ENCODE measurements at regions of chr11 and their contacts with region 1.

Region 1: GRCh38 chr11:75022759-75023396 is 34.1 kb downstream of the NEU3 start:
- DNase-seq: peak; percentile 91
- ATAC-seq: peak; percentile 99
- H3K4me3 Mint-ChIP-seq: no peak overlapping the region
- H3K27ac Mint-ChIP-seq: no peak overlapping the region
- H3K4me1 Mint-ChIP-seq: no peaks in the 10 kb centered on the region
- H3K27me3 Mint-ChIP-seq: peaks cover 4% of the 10 kb centered on the region
- CTCF ChIP-seq: peak; percentile 97

Region 2: DNA sequence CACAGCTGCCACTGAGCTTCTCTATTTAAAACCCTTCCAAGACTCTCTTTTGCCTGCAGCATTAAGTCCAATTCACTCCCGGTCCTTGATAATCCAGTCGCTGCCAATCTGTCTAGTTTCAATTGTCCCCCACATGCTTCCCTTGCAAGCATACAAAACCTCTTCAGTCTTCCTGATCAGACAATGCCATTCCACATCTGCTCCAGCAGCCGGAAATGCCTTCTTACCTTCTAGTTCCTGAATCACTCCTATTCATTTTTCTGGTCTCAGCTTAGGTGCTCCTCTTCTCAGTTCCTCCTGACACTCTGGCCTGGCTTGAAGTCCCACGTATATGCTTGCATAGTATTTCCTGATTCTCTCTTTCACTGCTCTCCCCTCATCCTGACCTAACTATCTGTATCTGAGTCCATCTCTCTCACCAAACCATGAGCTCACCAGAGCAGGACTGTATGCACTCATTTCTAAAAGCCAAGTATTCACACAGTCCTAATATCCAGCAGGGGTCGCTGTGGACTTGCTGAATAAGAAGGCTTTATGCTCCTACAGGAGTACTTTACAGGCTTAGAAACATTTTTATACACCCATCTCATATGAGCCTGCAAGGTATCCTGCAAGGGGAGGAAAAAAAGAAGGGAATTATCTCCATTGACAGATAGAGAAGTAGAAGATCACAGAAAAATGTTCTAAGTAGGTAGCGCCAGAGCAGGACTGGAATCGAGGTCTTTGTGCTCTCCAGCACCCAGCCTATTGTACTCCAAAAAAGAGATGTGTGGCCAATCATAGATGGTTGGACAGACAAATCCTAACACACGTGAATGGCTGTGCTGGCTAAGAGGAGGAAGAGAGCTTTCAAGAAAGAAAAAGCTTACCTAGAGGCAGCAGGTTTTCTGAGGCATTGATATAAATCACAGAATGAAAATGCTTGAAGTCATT is 93.2 kb before region 1 on chr11:
- CTCF ChIA-PET with region 1: interaction called, 10 read pairs
- POLR2A ChIA-PET with region 1: no interaction called
- DNase-seq: peak; percentile 53
- ATAC-seq: peak; percentile 95
- H3K4me3 Mint-ChIP-seq: no peak overlapping the region
- H3K27ac Mint-ChIP-seq: no peak overlapping the region
- H3K4me1 Mint-ChIP-seq: no peaks in the 10 kb centered on the region
- H3K27me3 Mint-ChIP-seq: no peaks in the 10 kb centered on the region
- CTCF ChIP-seq: peak; percentile 56; the same call in 1 of the 2 replicates

Region 3: DNA sequence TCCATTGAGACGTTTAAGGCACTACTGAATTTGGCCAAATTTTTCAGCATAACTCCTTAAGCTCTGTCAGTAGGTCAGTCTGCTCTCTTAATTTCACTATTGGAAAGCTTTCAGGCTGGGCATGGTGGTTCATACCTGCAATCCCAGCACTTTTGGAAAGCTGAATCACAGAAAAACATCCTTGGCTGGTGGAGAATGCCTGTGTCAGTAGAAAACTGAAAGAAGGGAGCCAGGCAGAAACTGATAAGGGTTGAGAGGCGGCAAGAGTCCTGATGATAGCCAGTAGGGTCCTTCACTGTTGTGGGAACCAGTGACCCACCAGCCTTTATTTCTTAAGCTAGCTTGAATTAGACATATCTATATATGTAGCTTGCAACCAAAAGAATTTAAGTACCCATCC is 11.5 kb before region 1 on chr11:
- CTCF ChIA-PET with region 1: interaction called, 16 read pairs
- POLR2A ChIA-PET with region 1: no interaction called
- DNase-seq: no peak
- ATAC-seq: no peak
- H3K4me3 Mint-ChIP-seq: no peak overlapping the region
- H3K27ac Mint-ChIP-seq: no peak overlapping the region
- H3K4me1 Mint-ChIP-seq: peaks cover 8% of the 10 kb centered on the region
- H3K27me3 Mint-ChIP-seq: no peaks in the 10 kb centered on the region
- CTCF ChIP-seq: no peak

Region 4: DNA sequence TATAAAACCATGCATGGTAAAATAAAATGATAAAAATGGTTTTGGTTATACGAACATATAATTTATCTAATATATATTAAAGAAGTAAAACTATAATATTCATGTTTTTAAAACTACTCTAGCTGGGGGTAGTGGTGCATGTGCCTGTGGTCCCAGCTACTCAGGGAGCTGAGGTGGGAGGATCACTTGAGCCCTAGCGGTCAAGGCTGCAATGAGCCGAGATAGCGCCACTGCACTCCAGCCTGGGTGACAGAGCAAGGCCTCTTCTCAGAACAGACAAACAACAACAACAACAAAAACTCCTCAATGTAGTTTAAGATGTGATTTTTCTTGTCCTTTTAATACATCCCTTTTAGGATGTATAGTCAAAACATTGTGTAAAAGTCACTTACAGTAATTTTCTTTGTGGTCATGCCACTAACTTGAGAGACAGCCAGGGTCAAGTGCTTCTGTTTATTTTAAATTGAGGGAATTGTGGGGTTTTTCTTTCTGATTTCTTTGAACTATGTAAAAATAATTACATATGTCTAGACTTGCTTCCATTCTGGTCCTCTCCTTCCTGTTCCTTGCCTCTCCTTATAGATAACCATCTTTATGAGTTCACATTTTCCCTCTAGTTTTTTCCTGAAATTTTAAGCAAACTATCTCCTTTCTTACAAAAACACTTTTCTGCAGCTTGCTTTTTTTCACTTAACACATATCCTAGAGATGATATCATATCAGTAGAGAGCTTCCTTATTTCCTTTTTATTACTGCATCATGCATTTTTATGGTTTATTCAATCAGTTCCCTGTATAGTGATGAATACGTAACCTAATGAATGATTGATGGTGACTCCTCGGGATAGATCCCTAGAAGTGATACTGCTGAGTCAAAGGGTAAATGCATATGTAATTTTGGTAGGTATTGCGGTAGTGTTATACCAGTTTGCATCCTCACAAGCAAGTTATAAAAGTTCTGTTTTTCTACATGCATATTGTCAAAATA is 64.7 kb after region 1 on chr11:
- CTCF ChIA-PET with region 1: interaction called, 10 read pairs
- POLR2A ChIA-PET with region 1: no interaction called
- DNase-seq: no peak
- ATAC-seq: peak; percentile 48; the same call in 1 of the 2 replicates
- H3K4me3 Mint-ChIP-seq: no peak overlapping the region
- H3K27ac Mint-ChIP-seq: no peak overlapping the region
- H3K4me1 Mint-ChIP-seq: 0 out of 2 replicates have a peak, but pooled peaks cover under 1% of the 10 kb centered on the region
- H3K27me3 Mint-ChIP-seq: peaks cover 2% of the 10 kb centered on the region; the same call in 1 of the 2 replicates
- CTCF ChIP-seq: no peak

Region 5: GRCh38 chr11:75223954-75224643 is 201.2 kb after region 1 on chr11:
- CTCF ChIA-PET with region 1: interaction called, 10 read pairs
- POLR2A ChIA-PET with region 1: no interaction called
- DNase-seq: no peak
- ATAC-seq: peak; percentile 85
- H3K4me3 Mint-ChIP-seq: no peak overlapping the region
- H3K27ac Mint-ChIP-seq: no peak overlapping the region
- H3K4me1 Mint-ChIP-seq: peaks cover 7% of the 10 kb centered on the region; the same call in 1 of the 2 replicates
- H3K27me3 Mint-ChIP-seq: peaks cover under 1% of the 10 kb centered on the region; the same call in 1 of the 2 replicates
- CTCF ChIP-seq: no peak

Measured in WTC11 (cell line).